ENCODE measurements at regions of chr16 and their contacts with region 1.

Region 1: GRCh38 chr16:75219838-75220237 is 1.1 kb downstream of the CTRB1 start:
- DNase-seq: no peak
- H3K4me3 ChIP-seq: no peak overlapping the region
- H3K27ac ChIP-seq: no peak overlapping the region
- H3K27me3 ChIP-seq: no peaks in the 10 kb centered on the region
- CTCF ChIP-seq: no peak

Region 2: DNA sequence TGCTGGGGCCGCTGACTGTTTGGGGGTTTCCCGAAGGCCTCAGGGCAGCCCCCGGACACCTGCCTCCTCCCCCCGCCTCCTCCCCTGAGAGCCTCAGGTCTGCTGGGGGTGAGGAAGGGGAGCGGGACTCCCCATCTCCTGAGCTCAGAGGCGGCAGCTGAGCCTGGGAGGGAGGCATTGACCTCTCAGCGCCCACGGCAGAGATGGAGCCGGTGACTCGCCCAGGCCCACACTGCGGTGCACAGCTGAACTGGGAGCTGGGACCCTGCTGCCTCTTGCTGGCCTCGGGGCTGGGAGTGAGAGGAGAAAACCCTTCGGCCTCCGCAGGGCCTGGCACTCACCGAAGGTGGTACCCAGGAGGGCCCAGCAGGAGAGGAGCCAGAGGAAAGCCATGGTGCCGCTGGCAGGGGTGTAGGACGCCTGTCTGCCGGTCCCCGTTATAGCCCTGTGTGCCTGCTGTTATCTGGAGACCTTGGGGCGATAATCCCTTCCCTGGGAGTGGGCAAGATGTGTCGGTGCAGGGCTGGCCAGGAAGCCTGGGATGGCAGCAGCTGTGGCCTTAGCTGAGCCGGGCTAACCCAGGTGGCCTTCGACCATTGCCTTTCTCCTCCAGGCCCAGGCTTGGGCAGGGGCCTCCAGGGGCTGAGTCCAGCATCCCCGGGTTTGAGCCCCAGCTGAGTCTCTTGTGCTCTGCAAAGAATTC is 12.9 kb before region 1 on chr16 and contains the start of gene CTRB2:
- CTCF ChIA-PET with region 1: no interaction called
- POLR2A ChIA-PET with region 1: interaction called, 16 read pairs
- DNase-seq: no peak
- H3K4me3 ChIP-seq: no peak within 1 kb of the TSS
- H3K27ac ChIP-seq: no peak within 1 kb of the TSS
- H3K27me3 ChIP-seq: peaks cover 3% of the 10 kb centered on the region
- CTCF ChIP-seq: no peak
- polyA plus RNA-seq, gene CTRB2: not detected in 2 replicates

Measured in AG04450 (cell line).